HepG2 (cell line): ENCODE measurements at regions of chr18 and their contacts with region 1.

Region 1: DNA sequence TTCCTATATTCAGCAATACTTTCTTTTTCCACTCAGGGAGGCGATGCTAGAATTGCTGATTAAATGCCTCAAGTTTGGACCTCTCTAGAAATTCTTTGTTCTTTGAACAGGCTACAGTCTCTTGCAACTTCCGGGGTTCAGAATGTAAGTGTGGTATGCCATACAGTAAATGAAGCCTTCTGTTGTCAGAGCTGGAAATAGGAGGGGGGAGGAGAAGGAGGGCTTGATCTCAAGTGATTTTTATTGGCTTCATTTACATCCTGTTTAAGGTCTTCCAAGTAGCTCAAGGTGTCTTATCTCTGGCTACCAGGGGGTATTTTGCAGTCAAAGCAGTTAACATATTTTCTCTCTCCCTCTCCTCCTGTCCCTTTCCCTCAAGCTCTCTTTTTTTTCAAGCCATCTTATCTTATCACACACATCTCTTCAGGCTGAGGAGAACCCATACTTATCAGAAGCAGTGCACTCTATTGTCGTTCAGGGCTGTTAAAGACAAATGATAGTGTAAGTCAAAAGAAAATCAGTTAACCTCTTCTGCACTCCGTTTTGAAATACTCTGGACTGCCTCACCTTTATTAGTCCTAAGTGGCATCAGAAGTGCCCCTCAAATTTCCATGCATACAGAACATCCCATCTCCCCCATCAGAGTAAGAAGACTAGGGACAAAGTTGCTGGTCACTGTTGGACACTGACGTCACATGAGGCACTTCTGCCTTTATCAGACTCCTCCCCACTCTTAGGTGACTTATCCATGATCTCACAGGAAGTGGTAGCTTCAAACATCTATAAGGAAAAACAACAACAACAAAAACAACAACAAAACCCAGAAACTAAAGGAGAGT is 112.2 kb downstream of the ZNF521 start:
- DNase-seq: no peak
- ATAC-seq: no peak
- H3K4me3 ChIP-seq: no peak overlapping the region
- H3K27ac ChIP-seq: no peak overlapping the region
- H3K4me1 ChIP-seq: no peaks in the 10 kb centered on the region
- H3K27me3 ChIP-seq: no peaks in the 10 kb centered on the region
- CTCF ChIP-seq: no peak
- EP300 ChIP-seq: no peak
- POLR2A ChIP-seq: no peak
- RAD21 ChIP-seq: no peak

Region 2: GRCh38 chr18:25081001-25081400 is 158.8 kb before region 1 on chr18:
- CTCF ChIA-PET with region 1: no interaction called
- POLR2A ChIA-PET with region 1: no interaction called
- in situ Hi-C with region 1: no loop called
- intact Hi-C with region 1: no loop called
- DNase-seq: no peak
- ATAC-seq: no peak
- H3K4me3 ChIP-seq: no peak overlapping the region
- H3K27ac ChIP-seq: no peak overlapping the region
- H3K4me1 ChIP-seq: peaks cover 16% of the 10 kb centered on the region
- H3K27me3 ChIP-seq: no peaks in the 10 kb centered on the region
- CTCF ChIP-seq: no peak
- EP300 ChIP-seq: no peak
- POLR2A ChIP-seq: no peak
- RAD21 ChIP-seq: no peak

Region 3: GRCh38 chr18:25164848-25165811 is 74.7 kb before region 1 on chr18:
- CTCF ChIA-PET with region 1: no interaction called
- POLR2A ChIA-PET with region 1: no interaction called
- in situ Hi-C with region 1: no loop called
- intact Hi-C with region 1: loop called (anchors 10 kb)
- DNase-seq: peak; percentile 2
- ATAC-seq: peak; percentile 79
- H3K4me3 ChIP-seq: no peak overlapping the region
- H3K27ac ChIP-seq: no peak overlapping the region
- H3K4me1 ChIP-seq: no peaks in the 10 kb centered on the region
- H3K27me3 ChIP-seq: no peaks in the 10 kb centered on the region
- CTCF ChIP-seq: no peak
- EP300 ChIP-seq: no peak
- POLR2A ChIP-seq: no peak
- RAD21 ChIP-seq: no peak

Region 4: GRCh38 chr18:25229080-25229479 is 10.7 kb before region 1 on chr18:
- CTCF ChIA-PET with region 1: no interaction called
- POLR2A ChIA-PET with region 1: no interaction called
- in situ Hi-C with region 1: no loop called
- intact Hi-C with region 1: no loop called
- DNase-seq: no peak
- ATAC-seq: no peak
- H3K4me3 ChIP-seq: no peak overlapping the region
- H3K27ac ChIP-seq: no peak overlapping the region
- H3K4me1 ChIP-seq: no peaks in the 10 kb centered on the region
- H3K27me3 ChIP-seq: peaks cover 0 to 6% of the 10 kb centered on the region in 2 experiments; a peak in 2 of 5 replicates
- CTCF ChIP-seq: no peak
- EP300 ChIP-seq: no peak
- POLR2A ChIP-seq: no peak
- RAD21 ChIP-seq: no peak

Region 5: DNA sequence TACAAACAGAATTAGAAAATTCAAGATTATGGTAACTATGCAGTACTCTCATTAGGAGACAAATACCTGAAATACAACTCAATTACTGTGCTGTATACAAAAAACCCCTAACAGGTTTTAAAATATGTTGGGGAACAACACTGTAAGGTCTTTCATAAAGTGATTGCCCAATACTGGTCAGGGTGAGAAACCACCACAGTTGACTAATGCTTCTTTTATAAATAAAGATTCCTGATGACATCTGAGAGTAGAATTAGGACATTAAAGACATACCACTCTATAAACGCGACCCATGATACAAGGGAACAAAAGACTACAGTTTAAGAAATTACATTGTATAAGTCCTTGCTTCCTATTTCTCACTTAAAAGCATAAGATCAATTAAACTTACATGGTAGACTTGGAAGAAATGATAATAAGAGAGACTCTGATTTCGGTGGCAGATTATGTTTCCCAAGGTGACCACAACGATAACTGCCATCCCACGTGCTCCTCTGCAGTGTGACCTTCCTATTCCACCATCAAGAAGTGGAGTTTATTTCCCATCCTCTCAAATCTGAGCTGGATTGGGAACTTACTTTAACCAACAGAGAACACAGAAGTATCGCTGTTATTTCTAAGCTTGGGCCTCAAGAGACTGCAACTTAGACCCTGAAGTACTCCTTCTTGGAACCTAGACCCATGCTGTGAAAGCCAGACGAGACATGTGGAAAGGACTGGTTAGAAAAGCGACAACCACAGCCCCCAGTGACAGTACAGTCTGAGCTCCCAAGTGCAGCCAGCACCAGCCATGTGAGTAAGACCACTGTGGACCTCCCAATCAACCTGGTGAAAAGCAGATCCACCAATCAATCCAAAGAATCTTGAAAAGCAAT is 59.9 kb after region 1 on chr18:
- CTCF ChIA-PET with region 1: no interaction called
- POLR2A ChIA-PET with region 1: no interaction called
- in situ Hi-C with region 1: no loop called
- intact Hi-C with region 1: loop called (anchors 10 kb)
- DNase-seq: no peak
- ATAC-seq: no peak
- H3K4me3 ChIP-seq: no peak overlapping the region
- H3K27ac ChIP-seq: no peak overlapping the region
- H3K4me1 ChIP-seq: no peaks in the 10 kb centered on the region
- H3K27me3 ChIP-seq: no peaks in the 10 kb centered on the region
- CTCF ChIP-seq: no peak
- EP300 ChIP-seq: no peak
- POLR2A ChIP-seq: no peak
- RAD21 ChIP-seq: no peak